Mucosa of descending colon (tissue), 3 donors: ENCODE measurements at regions of chr14 and their contacts with region 1.

Region 1: GRCh38 chr14:35404449-35405303 is at the start of gene NFKBIA:
- DNase-seq: peak; percentile 88 to 95 (median 94)
- ATAC-seq: peak; percentile 80
- H3K4me3 ChIP-seq: peak within 1 kb of the TSS; percentile 91
- H3K4me1 ChIP-seq: peaks cover 35% of the 10 kb centered on the region
- CTCF ChIP-seq: no peak
- total RNA-seq, gene NFKBIA: 134 to 180 (median 153) TPM

Region 2: DNA sequence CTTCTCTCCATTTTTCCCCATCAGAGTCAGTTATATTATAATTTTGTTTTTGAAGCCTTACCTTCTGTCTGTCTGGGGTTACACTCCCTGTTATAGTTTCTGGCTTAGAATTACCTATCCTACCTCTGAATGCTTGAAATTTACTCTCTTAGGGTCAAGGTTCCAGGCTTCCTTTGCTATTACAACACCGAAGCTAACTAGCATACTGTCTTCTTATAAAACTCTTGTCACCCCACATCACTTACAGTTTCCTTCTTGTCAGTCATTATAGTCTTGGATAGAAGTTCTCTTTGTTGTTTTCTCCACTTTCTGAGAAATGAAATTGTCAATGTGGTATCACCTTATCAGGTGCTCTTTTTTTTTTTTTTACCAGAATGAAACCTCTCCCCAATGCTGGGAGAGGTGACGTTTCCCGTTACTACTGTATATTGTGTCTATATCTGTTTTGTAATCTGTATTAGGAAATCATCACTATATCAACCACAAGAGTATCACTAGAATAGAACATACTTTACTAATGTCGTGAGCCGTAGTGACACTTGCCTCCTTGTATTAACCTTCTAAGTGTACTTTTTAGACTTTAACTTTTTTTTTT is 181.7 kb before region 1 on chr14:
- intact Hi-C with region 1: loop called in 1 of 2 experiments (anchors 5 kb)
- DNase-seq: no peak
- ATAC-seq: no peak
- H3K4me3 ChIP-seq: no peak overlapping the region
- H3K4me1 ChIP-seq: no peaks in the 10 kb centered on the region
- CTCF ChIP-seq: no peak

Region 3: GRCh38 chr14:35285168-35286002 is 119.3 kb before region 1 on chr14:
- intact Hi-C with region 1: loop called (anchors 5 to 10 kb)
- DNase-seq: no peak
- ATAC-seq: peak; percentile 73
- H3K4me3 ChIP-seq: no peak overlapping the region
- H3K4me1 ChIP-seq: no peaks in the 10 kb centered on the region
- CTCF ChIP-seq: no peak

Region 4: GRCh38 chr14:35292051-35292769 is 112.5 kb before region 1 on chr14 and contains the start of gene PSMA6:
- intact Hi-C with region 1: loop called (anchors 5 to 10 kb)
- DNase-seq: peak; percentile 99 to 100 (median 99)
- ATAC-seq: peak; percentile 98
- H3K4me3 ChIP-seq: peak within 1 kb of the TSS; percentile 72
- H3K4me1 ChIP-seq: peaks cover 28% of the 10 kb centered on the region
- CTCF ChIP-seq: no peak
- total RNA-seq, gene PSMA6: 130 to 183 (median 159) TPM

Region 5: DNA sequence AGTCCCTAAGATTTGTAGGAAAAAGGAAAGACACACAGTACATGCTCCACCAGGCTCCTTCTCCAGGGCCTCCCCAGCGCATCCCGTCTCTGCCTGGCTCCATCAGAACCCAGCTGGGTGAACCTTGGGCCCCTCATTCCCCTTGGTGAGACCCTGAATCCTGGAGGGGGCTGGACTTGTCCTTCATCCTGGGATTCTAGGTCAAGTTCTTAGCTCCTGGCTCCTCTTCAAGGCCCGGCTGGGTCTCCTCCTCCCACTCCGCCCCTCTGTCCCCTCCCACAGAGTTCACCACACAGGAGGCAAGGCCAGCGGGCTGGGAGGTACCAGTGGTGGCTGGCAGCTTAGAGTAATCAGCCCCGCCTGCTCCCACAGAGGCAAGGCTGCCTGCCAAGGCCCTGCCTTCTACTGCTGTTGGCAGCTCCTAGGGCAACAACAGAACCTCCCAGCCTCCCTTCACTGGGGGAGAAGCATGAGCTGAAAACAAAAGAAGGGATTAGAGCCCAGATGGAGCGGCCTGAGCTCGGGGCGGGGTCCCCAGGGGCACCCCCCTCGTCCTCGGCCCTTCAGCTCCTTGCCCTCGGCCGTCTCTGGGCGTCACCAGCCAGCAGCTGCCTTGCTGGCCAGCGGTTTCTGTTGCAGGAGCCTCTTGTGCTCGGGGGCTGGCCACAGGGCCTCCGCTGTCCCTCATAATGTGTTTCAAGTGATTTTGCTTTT is 63.1 kb before region 1 on chr14:
- intact Hi-C with region 1: loop called (anchors 5 to 10 kb)
- DNase-seq: peak; percentile 96 to 98 (median 97)
- ATAC-seq: peak; percentile 89
- H3K4me3 ChIP-seq: no peak overlapping the region
- H3K4me1 ChIP-seq: peaks cover 63% of the 10 kb centered on the region
- CTCF ChIP-seq: no peak